PC-3 (cell line): ENCODE measurements at regions of chr9 and their contacts with region 1.

Region 1: DNA sequence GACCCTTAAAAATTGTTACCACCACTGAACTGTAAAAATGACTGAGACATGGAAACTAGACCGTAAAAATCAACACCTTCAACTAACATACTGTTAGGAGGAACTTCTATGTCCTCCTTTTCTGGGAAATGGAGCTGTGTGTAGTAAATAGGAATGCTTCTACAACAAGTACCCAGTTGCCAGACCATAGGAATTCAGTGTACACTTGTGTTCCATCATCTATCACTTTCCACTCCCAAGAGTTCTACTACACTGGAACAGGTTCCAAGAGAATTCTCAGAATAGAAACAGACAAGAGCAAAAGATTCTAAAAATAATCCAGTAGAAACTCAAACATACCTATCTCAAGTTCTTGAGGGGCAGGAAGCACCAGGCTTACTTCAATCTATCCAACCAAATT is 23.6 kb downstream of the UBAP2 start:
- DNase-seq: no peak
- ATAC-seq: no peak
- H3K4me3 ChIP-seq: no peak overlapping the region
- H3K27ac ChIP-seq: no peak overlapping the region
- H3K4me1 ChIP-seq: no peaks in the 10 kb centered on the region
- H3K27me3 ChIP-seq: no peaks in the 10 kb centered on the region
- CTCF ChIP-seq: no peak

Region 2: DNA sequence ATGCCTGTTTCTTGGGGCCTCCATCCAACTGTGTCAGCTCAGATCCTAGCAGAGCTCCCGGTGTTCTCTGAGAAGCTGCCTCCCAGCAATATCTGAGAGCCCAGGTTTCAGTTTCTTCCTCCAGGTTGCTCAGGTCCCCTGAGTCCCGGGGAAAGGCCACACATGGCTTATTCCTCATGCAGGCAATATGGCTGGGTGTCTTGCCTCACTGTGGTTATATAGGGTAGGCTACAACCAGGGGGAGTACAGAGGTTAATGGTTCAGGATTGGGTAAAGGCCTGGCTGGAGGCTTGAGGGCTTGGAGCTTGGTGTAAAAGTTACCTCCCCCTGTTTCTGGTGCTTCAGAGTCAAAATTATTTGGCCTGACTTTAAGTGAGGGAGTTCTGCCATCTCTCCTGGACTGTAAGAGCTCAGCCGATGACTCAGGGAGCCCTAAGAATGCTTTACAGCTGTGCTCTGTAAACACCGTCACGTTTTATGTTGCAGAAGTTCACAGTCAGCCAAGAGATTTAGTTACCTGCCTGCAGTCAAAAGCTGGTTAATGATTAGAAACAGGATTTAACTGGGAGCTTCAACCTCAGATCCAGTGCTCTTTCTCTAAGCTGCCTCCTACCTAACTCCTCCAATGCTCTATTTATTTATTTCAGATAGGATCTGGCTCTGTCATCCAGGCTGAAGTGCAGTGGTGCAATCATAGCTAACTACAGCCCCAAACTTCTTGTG is 48.0 kb after region 1 on chr9:
- CTCF ChIA-PET with region 1: no interaction called
- POLR2A ChIA-PET with region 1: no interaction called
- intact Hi-C with region 1: loop called (anchors 5 kb)
- DNase-seq: peak; percentile 84
- ATAC-seq: peak; percentile 90
- H3K4me3 ChIP-seq: no peak overlapping the region
- H3K27ac ChIP-seq: peak overlapping the region; percentile 9; the same call in 1 of the 2 replicates
- H3K4me1 ChIP-seq: peaks cover 26% of the 10 kb centered on the region
- H3K27me3 ChIP-seq: no peaks in the 10 kb centered on the region
- CTCF ChIP-seq: no peak